Adrenal gland (tissue), 19 donors: ENCODE measurements at regions of chr5 and their contacts with region 1.

Region 1: GRCh38 chr5:134503088-134503946 is 22.2 kb upstream of the JADE2 start:
- DNase-seq: peak; percentile 55 to 92 (median 89)
- H3K4me3 ChIP-seq: no peak overlapping the region
- H3K27ac ChIP-seq: peak overlapping the region; percentile 27 to 94 (median 80)
- H3K4me1 ChIP-seq: peaks cover 30 to 35% of the 10 kb centered on the region in 2 donors
- H3K27me3 ChIP-seq: no peaks in the 10 kb centered on the region
- CTCF ChIP-seq: no peak
- POLR2A ChIP-seq: peak in 1 of 2 donors; percentile 77

Region 2: DNA sequence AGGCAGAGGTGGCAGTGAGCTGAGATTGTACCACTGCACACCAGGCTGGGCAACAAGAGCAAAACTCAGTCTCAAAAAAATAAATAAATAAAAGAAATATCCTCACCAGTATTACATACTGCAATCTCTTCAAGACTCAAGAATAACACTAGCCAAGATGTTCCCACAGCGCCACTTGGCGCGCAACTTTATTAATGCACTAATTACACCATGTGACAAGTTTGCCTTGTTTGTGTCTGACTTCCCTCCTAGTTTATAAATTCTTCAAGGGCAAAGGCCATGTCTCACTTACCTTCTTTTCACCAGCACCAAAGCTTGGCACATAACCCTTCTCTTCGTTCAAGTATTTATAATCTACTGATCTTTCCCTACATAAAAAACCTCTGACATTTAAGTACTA is 331.3 kb before region 1 on chr5:
- intact Hi-C with region 1: no loop called
- DNase-seq: no peak
- H3K4me3 ChIP-seq: no peak overlapping the region
- H3K27ac ChIP-seq: no peak overlapping the region
- H3K4me1 ChIP-seq: peaks cover 9 to 24% of the 10 kb centered on the region in 2 donors
- H3K27me3 ChIP-seq: no peaks in the 10 kb centered on the region
- CTCF ChIP-seq: no peak
- POLR2A ChIP-seq: no peak

Region 3: GRCh38 chr5:134465816-134466240 is 37.5 kb before region 1 on chr5:
- intact Hi-C with region 1: loop called in 1 of 2 experiments (anchors 5 kb)
- DNase-seq: peak; percentile 90 to 95 (median 91)
- H3K4me3 ChIP-seq: peak overlapping the region in 2 of 4 donors; percentile 26 to 53
- H3K27ac ChIP-seq: peak overlapping the region; percentile 94 to 99 (median 97)
- H3K4me1 ChIP-seq: peaks cover 16 to 37% of the 10 kb centered on the region in 2 donors
- H3K27me3 ChIP-seq: no peaks in the 10 kb centered on the region
- CTCF ChIP-seq: peak in 1 of 6 experiments; percentile 3
- POLR2A ChIP-seq: peak; percentile 59 to 73

Region 4: GRCh38 chr5:134873987-134874830 is 370.9 kb after region 1 on chr5 and contains the start of gene TXNDC15:
- intact Hi-C with region 1: no loop called
- DNase-seq: peak; percentile 87 to 95 (median 87)
- H3K4me3 ChIP-seq: peak within 1 kb of the TSS; percentile 72 to 90 (median 78)
- H3K27ac ChIP-seq: peak within 1 kb of the TSS; percentile 80 to 98 (median 92)
- H3K4me1 ChIP-seq: peaks cover 0 to 37% of the 10 kb centered on the region in 2 donors
- H3K27me3 ChIP-seq: no peaks in the 10 kb centered on the region
- CTCF ChIP-seq: no peak
- POLR2A ChIP-seq: peak; percentile 43 to 82
- total RNA-seq, gene TXNDC15: 62.2 to 267 (median 103) TPM

Region 5: GRCh38 chr5:135019314-135019713 is 516.0 kb after region 1 on chr5:
- intact Hi-C with region 1: no loop called
- DNase-seq: no peak
- H3K4me3 ChIP-seq: no peak overlapping the region
- H3K27ac ChIP-seq: no peak overlapping the region
- H3K4me1 ChIP-seq: no peaks in the 10 kb centered on the region
- H3K27me3 ChIP-seq: no peaks in the 10 kb centered on the region
- CTCF ChIP-seq: no peak
- POLR2A ChIP-seq: no peak